Sciatic nerve (tissue), 2 donors: ENCODE measurements at regions of chr15 and their contacts with region 1.

Region 1: GRCh38 chr15:93250950-93251349 is 161.9 kb upstream of the RGMA start:
- DNase-seq: no peak
- ATAC-seq: no peak

Region 2: GRCh38 chr15:91348752-91349500 is 1902.0 kb before region 1 on chr15:
- intact Hi-C with region 1: loop called (anchors 10 kb)
- DNase-seq: no peak
- ATAC-seq: no peak

Region 3: DNA sequence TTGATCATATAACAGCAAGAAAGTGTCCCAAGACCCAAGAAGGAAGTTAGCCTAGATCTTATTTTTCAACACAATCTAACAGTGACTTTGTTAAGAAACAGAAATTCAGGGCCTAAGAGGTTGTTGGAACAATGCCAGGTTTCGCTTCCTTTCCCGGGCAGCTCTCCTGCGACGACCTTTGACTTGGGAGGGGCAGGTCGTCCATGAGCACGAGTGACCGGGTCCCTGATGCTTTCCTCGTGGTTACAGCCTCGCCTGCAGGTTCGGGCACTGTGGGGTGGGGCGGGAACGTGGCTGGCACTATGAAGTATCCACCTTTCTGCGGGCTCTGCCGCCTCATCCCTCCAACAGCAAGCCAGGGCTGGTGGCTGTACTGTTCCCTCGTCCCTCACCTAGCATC is 71.9 kb before region 1 on chr15:
- intact Hi-C with region 1: no loop called
- DNase-seq: no peak
- ATAC-seq: peak; percentile 88